ENCODE measurements at regions of chr19 and their contacts with region 1.

Region 1: DNA sequence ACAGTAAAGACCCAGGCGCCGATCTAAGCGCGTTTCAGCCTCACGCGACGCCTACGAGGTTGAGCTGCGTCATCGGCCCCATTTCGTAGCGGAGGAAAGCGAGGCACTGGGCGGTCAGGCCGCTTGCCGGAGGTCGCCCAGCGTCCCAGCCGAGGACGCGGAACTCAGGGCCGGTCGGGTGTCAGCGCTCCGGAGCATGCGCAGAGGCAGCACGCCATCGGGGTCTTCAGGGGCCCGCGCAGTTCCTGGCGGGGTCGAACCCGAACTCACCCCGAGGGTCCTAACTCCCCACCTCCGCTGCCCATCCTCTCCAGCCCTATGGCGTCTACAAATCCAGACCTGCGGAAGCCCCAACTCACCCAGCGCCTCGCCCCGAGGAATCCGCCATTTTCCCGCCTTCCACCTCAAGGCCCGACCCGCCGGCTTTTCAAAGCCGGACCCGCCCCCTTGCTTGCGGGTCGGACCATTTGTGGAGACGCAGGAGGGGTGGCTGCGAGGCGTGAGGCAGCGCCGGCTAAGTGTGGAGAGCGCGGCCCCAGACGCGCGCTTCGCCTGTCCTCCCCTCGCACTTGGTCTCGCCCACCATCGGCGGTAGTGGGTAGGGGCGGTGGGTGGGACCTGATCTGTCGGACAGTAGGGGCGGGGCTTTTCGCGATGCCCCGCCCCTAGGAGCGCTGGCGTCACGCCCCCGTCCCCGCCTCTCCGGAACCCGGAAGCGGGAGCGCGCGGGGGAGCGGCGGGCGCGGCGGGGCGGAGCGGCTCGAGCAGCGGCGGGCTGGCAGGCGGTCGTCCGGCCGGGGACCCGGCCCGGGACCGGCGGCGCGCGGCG is at the starts of genes HAUS8 and MYO9B:
- DNase-seq: peak; percentile 99
- ATAC-seq: peak; percentile 97
- total RNA-seq, gene HAUS8: 5.4 TPM
- total RNA-seq, gene MYO9B: 33.2 TPM

Region 2: GRCh38 chr19:17136021-17136420 is 60.8 kb after region 1 on chr19:
- intact Hi-C with region 1: loop called (anchors 2 kb)
- DNase-seq: no peak
- ATAC-seq: no peak

Region 3: GRCh38 chr19:17226002-17226933 is 151.0 kb after region 1 on chr19 and contains the start of gene OCEL1:
- intact Hi-C with region 1: loop called (anchors 5 kb)
- DNase-seq: peak; percentile 100
- ATAC-seq: peak; percentile 98
- total RNA-seq, gene OCEL1: 26.0 TPM

Region 4: DNA sequence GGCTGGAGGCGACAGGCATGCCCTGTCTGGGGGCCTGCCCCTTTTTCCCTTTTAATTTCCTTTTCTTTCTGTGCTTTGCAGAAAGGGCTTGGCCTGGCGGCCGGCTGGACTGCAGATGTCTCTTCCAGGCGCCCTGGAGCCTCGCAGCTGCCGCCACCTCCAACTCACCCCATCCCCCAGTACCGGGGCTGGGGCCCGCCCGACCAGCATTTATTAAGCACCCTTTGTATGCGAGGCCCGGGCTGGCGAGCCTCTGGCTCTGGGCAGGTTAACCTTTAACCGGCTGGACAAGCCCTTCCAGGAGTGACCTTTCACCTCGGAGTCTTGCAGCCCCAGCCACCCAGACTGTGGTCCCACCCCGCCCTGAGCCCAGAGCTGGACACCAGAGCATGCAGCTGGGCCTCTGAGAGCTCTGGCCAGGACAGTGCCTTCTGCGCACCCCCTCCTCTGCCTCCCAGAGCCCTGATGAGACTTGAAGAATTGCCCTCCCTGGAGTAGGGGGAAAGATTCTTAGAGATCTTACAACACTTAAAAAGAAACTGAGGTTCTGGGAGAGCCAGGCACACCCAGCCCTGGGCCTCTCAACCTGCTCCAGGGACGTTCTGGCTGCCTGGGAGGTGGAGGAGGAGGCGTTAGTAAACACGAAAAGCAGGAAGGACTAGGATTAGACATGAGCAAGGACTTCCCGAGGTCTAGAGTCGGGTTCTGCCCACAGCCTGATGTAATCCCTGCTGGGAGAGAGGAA is 171.6 kb after region 1 on chr19:
- intact Hi-C with region 1: loop called (anchors 1 kb)
- DNase-seq: no peak
- ATAC-seq: peak; percentile 40